ENCODE measurements at regions of chr12 and their contacts with region 1.

Region 1: DNA sequence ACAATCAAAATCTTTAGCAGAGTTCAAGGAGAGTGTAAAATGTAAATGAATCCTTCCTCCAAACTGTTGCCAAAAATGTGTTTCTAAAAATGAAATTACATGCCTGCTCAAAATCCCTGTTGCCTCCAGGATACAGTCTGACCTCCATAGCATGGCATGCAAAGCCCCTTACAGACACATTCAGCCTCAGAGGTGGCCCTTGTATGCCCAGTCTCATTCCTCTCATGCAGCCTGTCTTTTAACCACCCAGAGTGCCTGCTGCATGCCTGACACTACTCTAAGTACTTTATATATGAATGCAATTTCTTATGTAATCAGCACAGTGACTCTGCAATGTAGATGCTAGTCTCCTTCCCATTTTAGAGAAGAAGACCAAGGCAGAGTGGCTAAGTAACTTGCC is 24.4 kb upstream of the PTPRQ start:
- DNase-seq: peak; percentile 26
- H3K4me3 ChIP-seq: no peak overlapping the region
- H3K27ac ChIP-seq: no peak overlapping the region
- H3K4me1 ChIP-seq: peaks cover 26% of the 10 kb centered on the region
- H3K27me3 ChIP-seq: no peaks in the 10 kb centered on the region
- CTCF ChIP-seq: no peak

Region 2: GRCh38 chr12:80033448-80033847 is 386.2 kb before region 1 on chr12:
- CTCF ChIA-PET with region 1: no interaction called
- POLR2A ChIA-PET with region 1: no interaction called
- intact Hi-C with region 1: no loop called
- DNase-seq: no peak
- H3K4me3 ChIP-seq: no peak overlapping the region
- H3K27ac ChIP-seq: no peak overlapping the region
- H3K4me1 ChIP-seq: no peaks in the 10 kb centered on the region
- H3K27me3 ChIP-seq: no peaks in the 10 kb centered on the region
- CTCF ChIP-seq: no peak

Region 3: GRCh38 chr12:80217011-80217535 is 202.6 kb before region 1 on chr12:
- CTCF ChIA-PET with region 1: no interaction called
- POLR2A ChIA-PET with region 1: no interaction called
- intact Hi-C with region 1: no loop called
- DNase-seq: no peak
- H3K4me3 ChIP-seq: no peak overlapping the region
- H3K27ac ChIP-seq: no peak overlapping the region
- H3K4me1 ChIP-seq: no peaks in the 10 kb centered on the region
- H3K27me3 ChIP-seq: no peaks in the 10 kb centered on the region
- CTCF ChIP-seq: no peak

Region 4: DNA sequence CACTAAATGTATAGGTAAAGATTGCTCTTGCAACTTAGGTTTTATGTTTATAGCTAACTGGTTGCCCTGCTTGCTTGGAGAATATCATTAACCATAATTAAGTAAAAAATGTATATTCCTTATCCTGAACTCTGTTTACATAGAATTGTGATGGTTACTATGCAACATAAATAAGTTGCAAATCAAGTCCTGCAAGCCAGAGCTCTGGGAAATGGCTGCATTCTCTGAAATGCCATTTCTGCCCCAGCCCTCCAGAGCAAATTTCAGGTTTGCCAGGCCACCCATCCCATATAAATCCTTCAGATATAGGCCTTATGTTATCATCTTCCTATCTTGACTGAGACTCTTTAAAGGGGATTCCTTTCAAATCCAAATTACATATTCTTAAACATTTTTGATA is 169.4 kb after region 1 on chr12:
- CTCF ChIA-PET with region 1: no interaction called
- POLR2A ChIA-PET with region 1: no interaction called
- intact Hi-C with region 1: no loop called
- DNase-seq: no peak
- H3K4me3 ChIP-seq: no peak overlapping the region
- H3K27ac ChIP-seq: no peak overlapping the region
- H3K4me1 ChIP-seq: peaks cover 26% of the 10 kb centered on the region
- H3K27me3 ChIP-seq: no peaks in the 10 kb centered on the region
- CTCF ChIP-seq: no peak

Region 5: GRCh38 chr12:80622271-80622670 is 202.6 kb after region 1 on chr12:
- CTCF ChIA-PET with region 1: no interaction called
- POLR2A ChIA-PET with region 1: no interaction called
- intact Hi-C with region 1: loop called (anchors 5 kb)
- DNase-seq: peak; percentile 83
- H3K4me3 ChIP-seq: no peak overlapping the region
- H3K27ac ChIP-seq: no peak overlapping the region
- H3K4me1 ChIP-seq: peaks cover 3% of the 10 kb centered on the region
- H3K27me3 ChIP-seq: no peaks in the 10 kb centered on the region
- CTCF ChIP-seq: peak; percentile 66

Region 6: GRCh38 chr12:81472934-81473333 is 1053.3 kb after region 1 on chr12:
- CTCF ChIA-PET with region 1: no interaction called
- POLR2A ChIA-PET with region 1: no interaction called
- intact Hi-C with region 1: no loop called
- DNase-seq: no peak
- H3K4me3 ChIP-seq: no peak overlapping the region
- H3K27ac ChIP-seq: no peak overlapping the region
- H3K4me1 ChIP-seq: peaks cover 8% of the 10 kb centered on the region
- H3K27me3 ChIP-seq: no peaks in the 10 kb centered on the region
- CTCF ChIP-seq: no peak